BJ (cell line): ENCODE measurements at regions of chr14 and their contacts with region 1.

Region 1: DNA sequence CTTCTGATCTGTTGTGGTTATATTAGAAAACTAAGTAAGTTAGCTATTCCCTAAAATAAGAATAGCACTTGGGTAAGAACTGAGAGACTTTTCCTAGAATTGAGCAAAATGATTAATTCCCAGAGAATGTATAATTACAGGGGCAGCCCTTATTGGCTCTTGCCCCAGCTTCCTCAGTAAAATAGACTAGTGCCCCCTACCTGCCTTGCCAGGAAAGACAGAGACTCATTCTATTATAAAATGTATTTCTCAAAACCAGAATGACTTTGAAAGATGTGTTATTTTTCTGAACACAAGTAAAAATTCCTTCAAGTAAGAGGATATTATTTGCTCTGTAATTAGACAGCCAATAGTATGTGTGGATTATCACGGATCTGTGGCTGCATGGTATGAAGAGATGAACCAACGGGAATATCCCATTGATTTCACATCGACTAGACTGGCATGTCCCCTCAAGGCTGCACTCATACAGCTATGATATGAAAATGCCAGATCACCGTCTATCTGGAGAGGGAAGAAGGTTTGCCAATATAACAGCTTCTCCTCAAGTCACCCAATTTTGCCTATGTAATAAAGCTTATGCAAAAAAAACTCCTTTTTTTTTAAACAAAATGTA is 7.4 kb upstream of the GLRX5 start:
- DNase-seq: peak; percentile 59
- H3K4me3 ChIP-seq: no peak overlapping the region
- H3K27me3 ChIP-seq: no peaks in the 10 kb centered on the region
- CTCF ChIP-seq: peak; percentile 76

Region 2: DNA sequence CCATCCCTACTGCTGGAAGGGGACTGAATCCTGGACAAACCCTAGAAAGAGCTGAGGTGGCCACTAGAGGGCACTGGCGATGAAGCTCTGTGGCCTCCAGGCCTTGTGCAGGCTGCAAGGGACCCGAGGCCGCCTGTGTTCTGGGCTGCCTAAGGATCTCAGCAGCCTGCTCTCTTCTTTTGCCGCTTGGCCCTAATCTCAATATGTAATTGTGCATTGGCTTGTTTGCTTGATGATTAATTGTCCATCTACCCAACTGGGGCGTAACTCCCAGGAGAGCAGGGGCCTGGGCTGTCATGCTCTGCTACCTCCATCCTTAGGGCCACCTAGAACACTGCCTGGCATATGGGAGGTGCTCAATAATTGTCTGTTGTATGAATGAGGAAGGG is 84.9 kb before region 1 on chr14:
- CTCF ChIA-PET with region 1: interaction called, 211 read pairs
- POLR2A ChIA-PET with region 1: no interaction called
- DNase-seq: no peak
- H3K4me3 ChIP-seq: no peak overlapping the region
- H3K27me3 ChIP-seq: no peaks in the 10 kb centered on the region
- CTCF ChIP-seq: peak; percentile 95

Region 3: DNA sequence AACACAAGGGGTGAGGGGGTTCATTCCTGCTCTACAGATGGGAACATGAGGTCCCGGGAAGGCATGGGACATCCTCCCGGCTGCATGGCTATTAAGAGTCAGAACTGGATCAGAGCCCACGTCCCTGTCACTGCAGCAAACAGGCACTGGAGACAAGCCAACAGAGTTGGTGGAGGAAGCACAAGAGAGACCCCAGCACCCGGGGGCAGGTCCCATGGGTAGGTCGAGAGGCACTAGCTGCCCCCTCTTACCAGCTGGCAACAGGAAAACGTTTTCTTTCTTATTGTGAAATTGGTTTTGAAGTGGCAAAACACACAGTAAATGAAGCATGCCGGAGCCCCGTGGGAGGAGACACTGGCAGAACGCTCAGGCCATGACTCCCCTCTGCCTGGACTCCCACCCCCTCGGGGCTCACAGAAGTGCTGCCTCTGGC is 54.7 kb before region 1 on chr14:
- CTCF ChIA-PET with region 1: interaction called, 10 read pairs
- POLR2A ChIA-PET with region 1: no interaction called
- DNase-seq: no peak
- H3K4me3 ChIP-seq: no peak overlapping the region
- H3K27me3 ChIP-seq: no peaks in the 10 kb centered on the region
- CTCF ChIP-seq: no peak

Region 4: DNA sequence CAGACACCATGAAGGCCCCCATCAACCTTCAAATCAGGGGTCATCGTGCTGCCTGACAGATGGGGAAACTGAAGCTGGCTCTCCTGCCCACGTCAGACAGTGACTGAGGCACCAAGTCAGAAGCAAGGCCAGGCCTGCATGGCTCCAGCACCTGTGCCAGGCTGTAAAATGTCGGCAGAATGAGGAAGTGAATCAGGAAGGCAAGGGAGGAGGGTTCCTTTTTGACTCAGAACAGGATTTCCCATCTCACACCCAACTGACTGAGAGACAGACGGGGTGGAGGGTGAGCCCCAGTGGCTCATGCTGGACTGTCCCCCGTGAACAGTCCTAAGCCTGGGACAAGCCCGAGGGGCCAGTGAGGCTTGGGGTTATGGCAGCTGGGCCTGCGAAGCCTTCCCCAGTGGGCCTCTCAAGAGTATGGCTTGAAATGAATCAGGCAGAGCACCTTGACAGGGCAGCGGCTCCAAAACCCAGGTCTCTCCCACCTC is 31.9 kb before region 1 on chr14:
- CTCF ChIA-PET with region 1: interaction called, 13 read pairs
- POLR2A ChIA-PET with region 1: no interaction called
- DNase-seq: no peak
- H3K4me3 ChIP-seq: no peak overlapping the region
- H3K27me3 ChIP-seq: no peaks in the 10 kb centered on the region
- CTCF ChIP-seq: no peak

Region 5: DNA sequence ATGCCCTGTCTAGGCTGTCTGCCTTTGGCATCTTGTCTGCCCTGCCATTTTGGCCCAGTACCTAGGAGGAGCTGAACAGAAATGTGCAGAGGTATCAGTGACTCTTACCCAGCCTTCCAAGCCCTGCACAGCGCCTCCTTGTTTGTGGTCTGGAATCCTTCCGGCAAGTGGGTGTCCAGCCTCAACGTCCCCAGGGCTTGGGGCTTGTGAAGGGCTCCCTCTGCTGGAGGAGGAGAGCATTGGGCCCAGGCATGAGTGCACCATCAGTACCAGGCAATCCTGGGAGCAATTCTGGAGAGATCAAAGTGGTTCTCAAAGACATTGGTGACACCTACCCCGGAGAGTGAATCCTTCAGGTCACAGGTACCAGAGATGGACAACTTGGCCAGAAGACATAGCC is 156.3 kb after region 1 on chr14:
- CTCF ChIA-PET with region 1: no interaction called
- POLR2A ChIA-PET with region 1: no interaction called
- DNase-seq: no peak
- H3K4me3 ChIP-seq: no peak overlapping the region
- H3K27me3 ChIP-seq: no peaks in the 10 kb centered on the region
- CTCF ChIP-seq: peak; percentile 38